ENCODE measurements at regions of chr5 and their contacts with region 1.

Region 1: DNA sequence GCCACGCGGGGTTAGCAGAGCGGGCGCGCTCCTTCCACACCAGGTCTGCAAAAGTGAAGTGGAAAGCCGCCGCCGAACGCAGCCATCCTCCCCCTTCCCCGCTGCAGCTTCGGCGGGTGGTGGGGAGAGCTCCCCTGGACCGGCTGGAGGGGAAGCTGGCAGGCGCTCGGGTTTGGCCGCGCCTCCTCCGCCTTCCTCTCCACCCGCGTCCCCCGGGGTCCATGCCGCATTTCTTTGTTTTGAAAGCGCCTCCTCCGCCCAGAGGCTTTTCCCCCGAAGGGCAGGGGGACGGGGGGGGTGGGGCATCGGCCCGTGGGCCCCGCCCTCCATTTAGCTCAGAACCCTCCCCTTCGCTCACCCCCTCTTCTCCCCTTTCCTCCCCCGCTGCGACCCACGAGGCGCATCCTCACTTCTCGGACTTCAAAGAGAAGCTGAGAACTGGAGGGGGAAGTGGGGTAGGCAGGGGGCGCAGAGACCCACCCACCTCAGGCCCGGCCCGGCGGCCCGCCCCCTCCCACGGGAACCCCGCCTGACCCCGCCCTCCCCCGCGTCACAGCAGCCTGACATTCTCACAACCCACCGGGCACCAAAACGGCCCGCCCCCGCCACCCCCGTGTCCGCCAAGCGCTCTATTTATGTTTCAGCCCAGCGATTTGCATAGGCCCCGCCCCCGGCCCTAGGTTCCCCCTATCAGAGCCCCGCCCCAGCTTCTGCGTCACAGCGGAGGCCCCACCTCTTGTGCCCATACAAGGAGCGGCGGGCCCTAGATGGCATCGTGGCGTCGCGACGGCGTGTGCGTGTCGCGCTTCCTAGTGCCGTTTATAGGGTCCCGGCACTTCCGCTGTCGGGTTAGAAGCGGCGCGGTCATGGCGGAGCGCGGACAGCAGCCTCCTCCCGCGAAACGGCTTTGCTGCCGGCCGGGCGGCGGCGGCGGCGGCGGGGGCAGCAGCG is at the start of gene ZSWIM6:
- DNase-seq: peak; percentile 99 to 100
- ATAC-seq: peak; percentile 92 to 96 (median 93)
- H3K4me3 ChIP-seq: peak within 1 kb of the TSS; percentile 96
- H3K27ac ChIP-seq: peak within 1 kb of the TSS; percentile 83
- H3K4me1 ChIP-seq: peaks cover 19% of the 10 kb centered on the region
- H3K27me3 ChIP-seq: no peaks in the 10 kb centered on the region
- CTCF ChIP-seq: no peak
- total RNA-seq, gene ZSWIM6: 2.4 to 6.3 (median 4.2) TPM

Region 2: DNA sequence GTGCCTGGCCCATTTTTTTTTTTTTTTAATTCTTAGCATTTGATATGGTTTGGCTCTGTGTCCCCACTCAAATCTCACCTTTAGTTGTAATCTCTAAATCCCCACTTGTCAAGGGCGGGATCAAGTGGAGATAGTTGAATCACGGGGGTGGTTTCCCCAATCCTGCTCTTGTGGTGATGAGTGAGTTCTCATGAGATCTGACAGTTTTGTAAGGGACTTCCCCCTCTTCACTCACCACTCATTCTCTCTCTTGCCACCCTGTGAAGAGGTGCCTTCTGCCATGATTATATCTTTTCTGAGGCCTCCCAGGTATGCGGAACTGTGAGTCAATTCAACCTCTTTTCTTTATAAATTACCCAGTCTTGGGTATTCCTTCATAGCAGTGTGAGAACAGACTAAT is 359.5 kb before region 1 on chr5:
- intact Hi-C with region 1: no loop called
- DNase-seq: no peak
- ATAC-seq: no peak
- H3K4me3 ChIP-seq: no peak overlapping the region
- H3K27ac ChIP-seq: no peak overlapping the region
- H3K4me1 ChIP-seq: peaks cover 16% of the 10 kb centered on the region
- H3K27me3 ChIP-seq: no peaks in the 10 kb centered on the region
- CTCF ChIP-seq: no peak

Region 3: GRCh38 chr5:61055434-61056006 is 276.2 kb before region 1 on chr5:
- intact Hi-C with region 1: loop called in 1 of 2 experiments (anchors 10 kb)
- DNase-seq: no peak
- ATAC-seq: peak in 1 of 4 donors; percentile 60
- H3K4me3 ChIP-seq: no peak overlapping the region
- H3K27ac ChIP-seq: no peak overlapping the region
- H3K4me1 ChIP-seq: no peaks in the 10 kb centered on the region
- H3K27me3 ChIP-seq: no peaks in the 10 kb centered on the region
- CTCF ChIP-seq: peak; percentile 57

Region 4: DNA sequence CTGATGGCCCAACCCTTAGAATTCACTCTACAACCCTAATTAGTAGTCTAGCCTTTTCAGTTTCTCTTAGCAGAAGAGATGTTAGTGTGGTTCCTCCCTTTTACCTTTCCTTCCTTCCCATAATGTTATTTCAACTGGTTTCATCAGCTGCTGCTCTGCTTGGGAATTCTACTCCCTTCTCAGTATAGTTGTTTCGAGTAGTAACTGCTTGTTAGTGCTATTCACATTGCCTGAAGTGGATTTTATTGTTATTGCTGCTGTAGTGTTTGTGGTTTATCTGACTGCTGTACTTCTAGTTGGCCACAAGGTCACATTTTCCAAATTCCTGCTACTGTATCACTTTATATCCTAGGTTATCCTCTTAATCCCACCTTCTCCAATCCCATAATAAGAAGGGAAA is 199.1 kb before region 1 on chr5:
- intact Hi-C with region 1: no loop called
- DNase-seq: no peak
- ATAC-seq: no peak
- H3K4me3 ChIP-seq: no peak overlapping the region
- H3K27ac ChIP-seq: no peak overlapping the region
- H3K4me1 ChIP-seq: no peaks in the 10 kb centered on the region
- H3K27me3 ChIP-seq: no peaks in the 10 kb centered on the region
- CTCF ChIP-seq: no peak

Region 5: GRCh38 chr5:61262080-61262479 is 69.6 kb before region 1 on chr5:
- intact Hi-C with region 1: no loop called
- DNase-seq: no peak
- ATAC-seq: peak in 1 of 4 donors; percentile 28
- H3K4me3 ChIP-seq: no peak overlapping the region
- H3K27ac ChIP-seq: no peak overlapping the region
- H3K4me1 ChIP-seq: no peaks in the 10 kb centered on the region
- H3K27me3 ChIP-seq: peaks cover 0 to 3% (median 0%) of the 10 kb centered on the region in 3 donors
- CTCF ChIP-seq: no peak

Region 6: GRCh38 chr5:61408476-61409168 is 76.9 kb after region 1 on chr5:
- intact Hi-C with region 1: loop called (anchors 5 kb)
- DNase-seq: peak; percentile 99 to 100
- ATAC-seq: peak; percentile 100
- H3K4me3 ChIP-seq: peak overlapping the region; percentile 60
- H3K27ac ChIP-seq: peak overlapping the region; percentile 58
- H3K4me1 ChIP-seq: peaks cover 17% of the 10 kb centered on the region
- H3K27me3 ChIP-seq: no peaks in the 10 kb centered on the region
- CTCF ChIP-seq: no peak

Region 7: GRCh38 chr5:61423487-61424145 is 91.9 kb after region 1 on chr5:
- intact Hi-C with region 1: no loop called
- DNase-seq: no peak
- ATAC-seq: peak in 2 of 4 donors; percentile 21 to 49
- H3K4me3 ChIP-seq: peak overlapping the region; percentile 36
- H3K27ac ChIP-seq: no peak overlapping the region
- H3K4me1 ChIP-seq: peaks cover 24% of the 10 kb centered on the region
- H3K27me3 ChIP-seq: no peaks in the 10 kb centered on the region
- CTCF ChIP-seq: no peak

Region 8: GRCh38 chr5:61658592-61659008 is 326.9 kb after region 1 on chr5:
- intact Hi-C with region 1: loop called (anchors 5 to 10 kb)
- DNase-seq: peak; percentile 75 to 87
- ATAC-seq: peak; percentile 86 to 94 (median 87)
- H3K4me3 ChIP-seq: no peak overlapping the region
- H3K27ac ChIP-seq: no peak overlapping the region
- H3K4me1 ChIP-seq: no peaks in the 10 kb centered on the region
- H3K27me3 ChIP-seq: no peaks in the 10 kb centered on the region
- CTCF ChIP-seq: peak; percentile 95

Measured in psoas muscle (tissue), 8 donors.